ENCODE measurements at regions of chr1 and their contacts with region 1.

Region 1: GRCh38 chr1:246497331-246497915 is 9.7 kb downstream of the SMYD3 start:
- DNase-seq: no peak
- H3K4me3 ChIP-seq: no peak overlapping the region
- H3K27ac ChIP-seq: no peak overlapping the region
- H3K4me1 ChIP-seq: peaks cover 1 to 5% (median 3%) of the 10 kb centered on the region in 4 donors
- H3K27me3 ChIP-seq: no peaks in the 10 kb centered on the region
- CTCF ChIP-seq: peak; percentile 68 to 79 (median 72)
- EP300 ChIP-seq: no peak
- POLR2A ChIP-seq: no peak

Region 2: GRCh38 chr1:246012341-246012740 is 485.1 kb before region 1 on chr1:
- intact Hi-C with region 1: loop called (anchors 5 kb)
- DNase-seq: no peak
- H3K4me3 ChIP-seq: no peak overlapping the region
- H3K27ac ChIP-seq: no peak overlapping the region
- H3K4me1 ChIP-seq: peaks cover 0 to 14% (median 6%) of the 10 kb centered on the region in 4 donors
- H3K27me3 ChIP-seq: no peaks in the 10 kb centered on the region
- CTCF ChIP-seq: peak; percentile 67 to 71 (median 70)
- EP300 ChIP-seq: no peak
- POLR2A ChIP-seq: no peak

Region 3: DNA sequence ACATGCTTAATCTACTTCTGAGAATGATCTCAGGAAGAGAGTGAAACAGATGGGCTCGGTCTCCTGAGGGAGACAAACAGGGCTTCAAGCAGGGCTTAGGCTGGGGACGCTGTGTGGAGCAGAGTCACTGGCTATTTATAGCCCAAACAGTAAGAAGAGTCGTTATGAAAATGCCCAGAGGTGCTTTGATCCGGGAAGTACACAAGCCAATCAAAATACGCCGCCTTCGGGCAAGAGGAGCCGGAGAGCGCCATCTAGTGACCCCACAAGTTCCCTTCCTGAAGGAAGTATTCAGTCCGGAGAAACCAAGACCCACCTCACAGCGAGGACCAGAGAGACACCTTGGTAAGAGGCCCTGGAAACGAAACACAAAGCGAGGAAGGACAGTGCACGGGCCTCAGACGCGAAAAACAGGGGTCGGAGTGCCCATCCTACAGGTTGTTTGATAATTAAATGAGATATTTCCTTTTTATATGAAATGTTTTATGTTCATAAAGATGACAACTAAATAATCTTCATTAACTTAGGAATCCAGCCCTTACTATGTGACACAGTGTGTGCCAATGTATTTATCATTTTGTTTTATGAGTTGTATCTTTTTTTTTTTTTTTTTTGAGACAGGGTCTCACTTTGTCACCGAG is 201.8 kb after region 1 on chr1:
- intact Hi-C with region 1: loop called (anchors 2 kb)
- DNase-seq: peak; percentile 95
- H3K4me3 ChIP-seq: peak overlapping the region; percentile 35 to 54 (median 40)
- H3K27ac ChIP-seq: peak overlapping the region; percentile 30 to 70 (median 54)
- H3K4me1 ChIP-seq: peaks cover 7 to 19% (median 14%) of the 10 kb centered on the region in 4 donors
- H3K27me3 ChIP-seq: no peaks in the 10 kb centered on the region
- CTCF ChIP-seq: peak; percentile 78 to 87 (median 85)
- EP300 ChIP-seq: no peak
- POLR2A ChIP-seq: no peak

Region 4: GRCh38 chr1:246753670-246754535 is 256.5 kb after region 1 on chr1:
- intact Hi-C with region 1: loop called (anchors 10 kb)
- DNase-seq: no peak
- H3K4me3 ChIP-seq: no peak overlapping the region
- H3K27ac ChIP-seq: no peak overlapping the region
- H3K4me1 ChIP-seq: peaks cover 0 to 7% (median 3%) of the 10 kb centered on the region in 4 donors
- H3K27me3 ChIP-seq: no peaks in the 10 kb centered on the region
- CTCF ChIP-seq: peak; percentile 60 to 83 (median 64)
- EP300 ChIP-seq: no peak
- POLR2A ChIP-seq: no peak

Measured in esophagus muscularis mucosa (tissue), 4 donors.